Upper lobe of right lung (tissue), 1 donor: ENCODE measurements at regions of chr5 and their contacts with region 1.

Region 1: GRCh38 chr5:174311531-174312269 is 266.2 kb downstream of the NSG2 start:
- DNase-seq: peak; percentile 84
- ATAC-seq: peak; percentile 88
- H3K4me3 ChIP-seq: peak overlapping the region; percentile 35
- H3K27ac ChIP-seq: no peak overlapping the region
- H3K4me1 ChIP-seq: no peaks in the 10 kb centered on the region
- H3K27me3 ChIP-seq: peaks cover 21% of the 10 kb centered on the region
- CTCF ChIP-seq: peak; percentile 83

Region 2: DNA sequence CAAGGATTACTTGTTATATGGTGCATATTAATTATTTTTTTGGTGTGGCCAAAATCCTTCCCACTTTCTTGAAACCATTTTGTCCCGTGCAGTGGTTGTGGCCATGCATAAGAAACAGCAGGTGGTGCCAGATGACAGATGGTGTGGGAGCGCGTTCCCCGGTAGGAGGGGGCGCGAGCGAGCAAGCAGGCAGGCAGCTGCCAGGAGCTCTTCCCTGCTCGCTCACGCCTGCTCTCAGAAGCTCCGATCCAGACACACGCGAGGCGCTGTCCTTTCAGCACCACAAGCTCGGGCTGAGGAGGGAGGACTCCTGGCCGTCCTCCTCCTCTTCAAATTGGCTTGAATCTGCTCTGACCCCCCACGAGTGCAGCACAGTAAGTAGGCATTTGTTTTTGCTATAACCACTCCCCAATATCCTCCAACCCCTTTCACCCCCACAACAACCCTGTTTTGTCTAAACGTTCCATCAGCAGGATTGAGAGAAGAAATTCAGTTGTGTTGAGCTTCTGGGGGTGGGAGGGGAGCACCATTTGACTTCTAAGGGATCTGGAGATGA is 266.2 kb before region 1 on chr5 and contains the start of gene NSG2:
- intact Hi-C with region 1: loop called (anchors 10 kb)
- DNase-seq: peak; percentile 86
- ATAC-seq: peak; percentile 95
- H3K4me3 ChIP-seq: no peak within 1 kb of the TSS
- H3K27ac ChIP-seq: no peak within 1 kb of the TSS
- H3K4me1 ChIP-seq: no peaks in the 10 kb centered on the region
- H3K27me3 ChIP-seq: peaks cover 12% of the 10 kb centered on the region
- CTCF ChIP-seq: peak; percentile 43
- total RNA-seq, gene NSG2: not detected